Lower leg skin (tissue), 4 donors: ENCODE measurements at regions of chr14 and their contacts with region 1.

Region 1: DNA sequence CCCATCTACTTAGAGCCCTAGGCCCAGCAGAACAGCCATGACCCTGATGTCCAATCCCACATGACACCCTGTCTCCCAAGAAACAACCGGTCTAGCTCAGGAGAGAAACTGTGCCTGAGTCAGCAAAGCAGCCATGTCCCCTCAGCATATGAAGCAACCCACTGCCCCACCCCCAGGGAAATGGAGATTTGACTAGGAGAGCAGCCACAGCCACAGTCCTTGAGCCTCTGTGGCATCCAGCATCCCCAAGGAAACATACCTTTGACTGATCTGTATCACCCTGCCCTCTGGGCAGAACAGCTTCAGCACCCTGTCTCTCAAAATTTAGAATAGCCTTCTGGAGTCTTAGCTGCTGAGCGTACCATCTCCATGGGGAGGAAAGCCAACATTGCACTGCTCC is 642.0 kb upstream of the FBXO33 start:
- DNase-seq: no peak
- H3K4me3 ChIP-seq: no peak overlapping the region
- CTCF ChIP-seq: no peak
- POLR2A ChIP-seq: no peak

Region 2: DNA sequence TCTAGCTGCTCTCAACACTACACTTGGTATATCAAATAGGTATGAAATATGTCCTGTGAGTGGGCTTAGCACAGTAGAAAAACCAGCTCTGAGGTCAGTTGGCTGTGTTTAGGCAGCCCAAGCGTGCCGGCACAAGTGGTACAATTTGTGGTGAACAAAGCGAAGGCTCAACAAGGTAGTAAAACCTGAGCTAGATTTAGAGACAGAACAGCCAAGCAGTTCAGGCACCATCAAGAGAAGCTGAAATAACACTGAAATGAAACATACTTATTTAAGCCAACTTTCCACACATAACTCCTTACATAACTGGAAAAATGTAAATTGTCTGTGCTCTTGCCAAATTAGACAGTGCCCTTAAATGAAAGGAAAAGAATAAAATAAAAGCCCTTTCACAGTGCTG is 45.2 kb before region 1 on chr14:
- intact Hi-C with region 1: loop called (anchors 1 kb)
- DNase-seq: no peak
- H3K4me3 ChIP-seq: no peak overlapping the region
- CTCF ChIP-seq: no peak
- POLR2A ChIP-seq: no peak